ENCODE measurements at regions of chr5 and their contacts with region 1.

Region 1: GRCh38 chr5:58886315-58887207 is 303.7 kb downstream of the RAB3C start:
- DNase-seq: peak; percentile 73
- CTCF ChIP-seq: peak; percentile 90

Region 2: GRCh38 chr5:58871648-58872242 is 14.8 kb before region 1 on chr5:
- CTCF ChIA-PET with region 1: interaction called, 67 read pairs
- POLR2A ChIA-PET with region 1: no interaction called
- DNase-seq: no peak
- CTCF ChIP-seq: peak; percentile 54

Region 3: GRCh38 chr5:58974601-58975000 is 88.0 kb after region 1 on chr5:
- CTCF ChIA-PET with region 1: interaction called, 10 read pairs
- POLR2A ChIA-PET with region 1: no interaction called
- DNase-seq: no peak
- CTCF ChIP-seq: no peak

Region 4: GRCh38 chr5:59174248-59174844 is 287.8 kb after region 1 on chr5:
- CTCF ChIA-PET with region 1: interaction called, 39 read pairs
- POLR2A ChIA-PET with region 1: no interaction called
- DNase-seq: peak; percentile 20
- CTCF ChIP-seq: peak; percentile 83

Measured in GM10248 (cell line).